ENCODE measurements at regions of chr14 and their contacts with region 1.

Region 1: DNA sequence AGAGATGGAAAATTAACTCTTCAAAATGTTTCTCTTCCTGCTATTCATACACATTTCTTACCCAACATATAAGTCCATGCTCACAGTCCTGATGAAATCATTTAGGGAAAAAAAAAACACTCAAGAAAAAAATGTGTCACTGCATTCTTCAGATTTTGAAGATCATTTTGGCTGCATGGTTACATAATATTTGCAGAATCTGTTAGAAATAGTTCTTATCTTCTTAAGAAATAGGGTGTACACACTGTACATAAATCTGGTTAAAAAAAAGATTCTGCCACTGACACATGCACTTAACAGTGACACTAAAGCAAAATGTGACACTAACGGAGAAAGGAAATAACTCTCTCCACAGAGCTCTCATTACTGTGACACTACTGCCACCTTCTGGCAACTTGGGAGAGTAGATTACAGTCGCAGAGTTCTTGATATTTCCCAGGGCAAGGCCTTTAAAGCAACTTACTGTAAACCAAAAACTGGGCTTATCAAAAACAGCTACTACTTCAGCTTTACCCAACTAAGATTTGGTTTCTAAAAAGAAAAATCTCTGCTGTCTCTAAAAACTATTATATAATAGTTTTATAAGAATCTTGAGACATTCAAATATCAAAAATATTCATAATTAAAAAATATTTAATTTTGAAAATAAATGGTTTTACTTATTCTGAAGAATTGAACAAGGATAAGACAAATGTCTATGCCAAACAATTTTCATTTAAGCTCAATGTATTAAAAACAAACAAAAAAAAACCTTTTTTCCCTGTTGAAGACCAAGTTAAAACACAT is 65.0 kb downstream of the SETD3 start:
- DNase-seq: peak; percentile 54
- H3K4me3 Mint-ChIP-seq: no peak overlapping the region
- H3K27ac Mint-ChIP-seq: no peak overlapping the region
- H3K4me1 Mint-ChIP-seq: peaks cover 10% of the 10 kb centered on the region
- H3K27me3 Mint-ChIP-seq: no peaks in the 10 kb centered on the region
- CTCF ChIP-seq: peak; percentile 34

Region 2: GRCh38 chr14:99393047-99393655 is 22.5 kb before region 1 on chr14:
- CTCF ChIA-PET with region 1: interaction called, 11 read pairs
- intact Hi-C with region 1: loop called (anchors 1 kb)
- DNase-seq: peak; percentile 63
- H3K4me3 Mint-ChIP-seq: no peak overlapping the region
- H3K27ac Mint-ChIP-seq: no peak overlapping the region
- H3K4me1 Mint-ChIP-seq: no peaks in the 10 kb centered on the region
- H3K27me3 Mint-ChIP-seq: no peaks in the 10 kb centered on the region
- CTCF ChIP-seq: peak; percentile 77

Region 3: DNA sequence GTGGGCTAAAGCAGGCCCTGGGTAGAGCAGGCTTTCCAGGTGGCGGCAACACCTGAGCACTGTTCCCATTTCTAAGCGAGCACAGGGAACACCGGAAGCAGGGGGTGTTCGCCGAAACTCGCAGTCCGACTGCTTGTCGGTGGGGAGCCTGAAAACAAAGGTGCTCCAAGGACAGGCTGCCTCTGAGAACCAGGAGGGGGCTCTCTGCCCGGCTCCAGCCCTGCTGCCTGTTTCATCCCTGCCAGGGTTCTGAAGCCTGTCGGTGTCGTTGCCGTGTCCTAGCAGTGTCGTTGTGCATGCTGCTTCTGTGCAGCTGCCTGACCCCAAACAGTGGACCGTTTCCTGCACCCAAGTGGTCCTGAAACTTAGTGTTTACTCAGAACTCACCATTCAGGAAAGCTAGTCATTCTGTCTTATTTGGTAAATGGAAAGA is 87.3 kb after region 1 on chr14:
- CTCF ChIA-PET with region 1: no interaction called
- intact Hi-C with region 1: no loop called
- DNase-seq: no peak
- H3K4me3 Mint-ChIP-seq: no peak overlapping the region
- H3K27ac Mint-ChIP-seq: no peak overlapping the region
- H3K4me1 Mint-ChIP-seq: no peaks in the 10 kb centered on the region
- H3K27me3 Mint-ChIP-seq: no peaks in the 10 kb centered on the region
- CTCF ChIP-seq: no peak